B cell (primary cell): ENCODE measurements at regions of chr17 and their contacts with region 1.

Region 1: GRCh38 chr17:81601525-81602120 is 35.3 kb downstream of the NPLOC4 start:
- DNase-seq: peak; percentile 81
- ATAC-seq: peak; percentile 52
- H3K4me3 ChIP-seq: no peak overlapping the region
- H3K4me3 Mint-ChIP-seq: peak overlapping the region; percentile 14
- H3K27ac ChIP-seq: no peak overlapping the region
- H3K27ac Mint-ChIP-seq: peak overlapping the region; percentile 43
- H3K4me1 ChIP-seq: peaks cover 22 to 43% of the 10 kb centered on the region in 2 donors
- H3K4me1 Mint-ChIP-seq: peaks cover 38% of the 10 kb centered on the region
- H3K27me3 ChIP-seq: no peaks in the 10 kb centered on the region
- H3K27me3 Mint-ChIP-seq: no peaks in the 10 kb centered on the region
- CTCF ChIP-seq: peak; percentile 95

Region 2: GRCh38 chr17:80913928-80914821 is 687.4 kb before region 1 on chr17:
- CTCF ChIA-PET with region 1: no interaction called
- POLR2A ChIA-PET with region 1: interaction called, 10 read pairs
- intact Hi-C with region 1: no loop called
- DNase-seq: peak; percentile 56
- ATAC-seq: peak; percentile 28
- H3K4me3 ChIP-seq: peak overlapping the region in 3 of 5 experiments; percentile 20 to 30 (median 28)
- H3K4me3 Mint-ChIP-seq: peak overlapping the region; percentile 68
- H3K27ac ChIP-seq: peak overlapping the region; percentile 38 to 100
- H3K27ac Mint-ChIP-seq: peak overlapping the region; percentile 95
- H3K4me1 ChIP-seq: peaks cover 61 to 67% of the 10 kb centered on the region in 2 donors
- H3K4me1 Mint-ChIP-seq: peaks cover 57% of the 10 kb centered on the region
- H3K27me3 ChIP-seq: no peaks in the 10 kb centered on the region
- H3K27me3 Mint-ChIP-seq: no peaks in the 10 kb centered on the region
- CTCF ChIP-seq: no peak

Region 3: DNA sequence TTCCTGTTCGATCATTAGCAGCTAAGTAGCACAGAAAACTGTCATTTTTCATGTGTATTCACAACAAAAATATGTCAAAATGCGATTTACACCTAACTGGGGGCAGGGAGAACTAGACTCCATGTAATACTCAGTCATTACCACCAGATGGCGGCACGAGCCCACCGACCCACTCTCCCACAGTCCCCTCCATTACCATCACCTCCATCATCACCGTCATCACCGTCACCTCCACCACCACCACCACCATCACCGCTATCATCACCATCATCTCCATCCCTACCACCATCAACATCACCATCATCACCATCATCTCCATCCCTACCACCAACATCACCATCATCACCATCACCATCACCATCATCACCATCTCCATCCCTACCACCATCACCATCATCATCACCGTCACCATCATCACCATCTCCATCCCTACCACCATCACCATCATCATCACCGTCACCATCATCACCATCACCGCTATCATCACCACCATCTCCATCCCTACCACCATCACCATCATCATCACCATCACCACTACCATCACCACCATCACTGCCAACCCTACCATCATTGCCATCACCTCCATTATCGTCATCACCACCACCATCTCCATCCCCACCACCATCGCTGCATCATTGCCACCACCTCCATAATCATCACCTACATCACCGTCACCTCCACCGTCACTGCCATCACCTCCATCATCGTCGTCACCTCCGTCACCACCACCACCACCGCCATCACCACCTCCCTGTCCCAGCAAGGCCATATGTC is 348.1 kb before region 1 on chr17:
- CTCF ChIA-PET with region 1: interaction called, 33 read pairs
- POLR2A ChIA-PET with region 1: no interaction called
- intact Hi-C with region 1: no loop called
- DNase-seq: peak; percentile 77
- ATAC-seq: peak; percentile 83
- H3K4me3 ChIP-seq: no peak overlapping the region
- H3K4me3 Mint-ChIP-seq: no peak overlapping the region
- H3K27ac ChIP-seq: no peak overlapping the region
- H3K27ac Mint-ChIP-seq: peak overlapping the region; percentile 17
- H3K4me1 ChIP-seq: peaks cover 0 to 11% of the 10 kb centered on the region in 2 donors
- H3K4me1 Mint-ChIP-seq: peaks cover 7% of the 10 kb centered on the region
- H3K27me3 ChIP-seq: no peaks in the 10 kb centered on the region
- H3K27me3 Mint-ChIP-seq: no peaks in the 10 kb centered on the region
- CTCF ChIP-seq: peak; percentile 83

Region 4: DNA sequence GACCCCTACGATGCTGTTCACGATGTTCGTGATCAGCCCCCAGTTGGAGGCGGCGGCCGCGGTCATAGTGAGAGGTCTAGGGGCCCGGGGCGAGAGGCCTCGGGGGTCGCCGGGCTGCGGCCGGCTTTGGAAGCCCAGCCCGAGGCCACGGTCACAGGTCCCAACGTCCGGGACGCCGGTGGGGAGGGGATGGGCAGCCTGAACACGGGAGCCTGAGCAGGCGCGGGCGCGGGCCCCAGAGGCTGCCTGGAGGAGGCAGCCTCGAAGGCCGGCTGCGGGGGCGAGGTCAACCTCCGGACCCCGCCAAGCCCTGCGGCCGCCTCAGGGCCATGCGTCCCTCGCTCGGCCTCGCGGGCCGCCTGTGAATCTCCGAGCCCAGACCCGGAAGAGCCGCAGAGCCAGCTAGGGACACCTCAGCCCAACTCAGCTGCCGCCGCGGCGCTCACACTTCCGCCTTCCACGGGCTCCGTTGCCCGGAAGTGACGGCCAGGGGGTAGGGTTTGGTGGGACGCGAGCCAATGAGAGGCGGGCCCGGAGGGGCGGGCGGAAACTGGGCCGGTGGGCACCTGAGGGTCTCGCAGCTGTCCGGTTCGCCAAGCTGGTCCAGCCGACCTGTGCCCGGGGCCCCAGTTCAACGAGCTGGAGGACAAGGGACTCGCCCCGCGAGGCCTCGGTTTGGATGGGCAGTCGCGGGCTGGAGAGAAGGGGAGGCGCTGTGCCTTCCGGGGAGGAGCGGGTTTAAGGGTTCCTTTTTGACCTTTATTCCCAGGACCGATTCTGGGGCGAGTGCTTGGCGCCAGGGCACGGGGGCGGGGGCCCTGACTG is 306.6 kb before region 1 on chr17 and contains the start of gene SLC38A10:
- CTCF ChIA-PET with region 1: interaction called, 31 read pairs
- POLR2A ChIA-PET with region 1: no interaction called
- intact Hi-C with region 1: loop called (anchors 1 kb)
- DNase-seq: peak; percentile 92
- ATAC-seq: peak; percentile 86
- H3K4me3 ChIP-seq: peak within 1 kb of the TSS; percentile 66 to 97 (median 91)
- H3K4me3 Mint-ChIP-seq: peak within 1 kb of the TSS; percentile 97
- H3K27ac ChIP-seq: peak within 1 kb of the TSS; percentile 75 to 94
- H3K27ac Mint-ChIP-seq: peak within 1 kb of the TSS; percentile 97
- H3K4me1 ChIP-seq: peaks cover 19 to 28% of the 10 kb centered on the region in 2 donors
- H3K4me1 Mint-ChIP-seq: peaks cover 43% of the 10 kb centered on the region
- H3K27me3 ChIP-seq: no peaks in the 10 kb centered on the region
- H3K27me3 Mint-ChIP-seq: no peaks in the 10 kb centered on the region
- CTCF ChIP-seq: no peak
- total RNA-seq, gene SLC38A10: 104 and 116 TPM in 2 replicates

Region 5: DNA sequence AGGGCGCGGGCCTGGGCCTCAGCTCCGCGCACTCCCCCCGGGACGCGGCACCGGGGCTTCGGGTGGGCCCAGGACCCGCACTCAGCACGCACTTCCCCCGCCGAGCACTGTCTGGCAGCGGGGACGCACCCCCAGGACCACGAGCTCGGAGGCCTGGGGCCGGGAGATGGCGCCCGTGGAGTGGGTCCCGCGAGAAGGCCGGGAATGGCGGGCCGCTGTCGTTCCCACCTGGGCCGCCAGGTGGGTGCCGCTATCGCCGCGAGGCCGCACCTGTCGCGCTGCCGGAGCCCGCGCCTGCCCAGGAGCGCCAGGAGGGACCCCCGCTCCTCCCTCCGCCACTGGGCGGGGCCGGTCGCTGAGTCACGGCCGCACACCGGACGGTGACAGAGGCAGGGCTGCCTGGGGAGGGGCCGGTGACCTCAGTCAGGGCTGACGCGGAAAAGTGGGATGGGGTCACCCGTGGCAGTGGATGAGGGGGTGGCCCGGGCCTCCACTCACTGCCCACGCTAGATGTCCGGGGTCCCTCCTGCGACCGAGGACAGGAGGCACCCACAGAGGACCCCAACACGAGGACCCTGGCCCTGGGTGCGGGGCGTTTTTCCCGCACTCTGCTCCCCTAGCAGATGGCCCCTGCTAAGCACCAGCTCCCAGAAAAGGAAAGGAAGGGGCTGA is 82.2 kb before region 1 on chr17:
- CTCF ChIA-PET with region 1: interaction called, 75 read pairs
- POLR2A ChIA-PET with region 1: interaction called, 24 read pairs
- intact Hi-C with region 1: loop called (anchors 1 kb)
- DNase-seq: peak; percentile 88
- ATAC-seq: peak; percentile 14
- H3K4me3 ChIP-seq: peak overlapping the region in 4 of 5 experiments; percentile 47 to 94 (median 64)
- H3K4me3 Mint-ChIP-seq: peak overlapping the region; percentile 98
- H3K27ac ChIP-seq: peak overlapping the region; percentile 97 to 98
- H3K27ac Mint-ChIP-seq: peak overlapping the region; percentile 86
- H3K4me1 ChIP-seq: peaks cover 37 to 55% of the 10 kb centered on the region in 2 donors
- H3K4me1 Mint-ChIP-seq: peaks cover 42% of the 10 kb centered on the region
- H3K27me3 ChIP-seq: no peaks in the 10 kb centered on the region
- H3K27me3 Mint-ChIP-seq: no peaks in the 10 kb centered on the region
- CTCF ChIP-seq: peak; percentile 87

Region 6: DNA sequence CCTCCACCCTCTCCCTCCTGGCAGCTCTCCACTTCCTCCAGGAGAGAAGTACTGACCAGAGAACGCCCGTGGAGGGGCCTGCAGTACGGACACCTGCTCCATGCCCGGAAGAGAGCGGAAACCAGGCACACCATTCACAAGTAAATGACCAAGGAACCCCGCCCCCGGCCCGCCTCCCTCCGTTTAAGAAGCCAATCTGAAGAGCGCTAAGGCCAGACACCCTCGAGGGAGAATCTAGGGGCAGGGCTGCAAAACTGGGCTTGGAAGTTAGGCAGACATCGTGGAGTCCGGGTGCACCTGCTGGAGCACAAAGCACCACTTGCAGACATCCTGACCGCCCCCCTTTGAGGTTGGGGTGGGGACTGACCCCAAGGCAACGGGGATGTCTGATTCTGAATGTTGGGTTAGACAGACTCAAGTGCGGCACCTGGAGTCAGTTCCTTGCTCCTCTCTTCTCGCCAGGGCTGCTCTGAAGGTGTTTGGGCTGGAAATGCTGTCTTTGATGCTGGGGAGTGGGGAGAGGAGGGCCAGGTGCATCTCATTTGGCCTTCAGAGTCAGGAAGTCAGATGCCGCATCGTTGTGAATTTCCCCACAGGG is 48.5 kb before region 1 on chr17:
- CTCF ChIA-PET with region 1: interaction called, 22 read pairs
- POLR2A ChIA-PET with region 1: interaction called, 11 read pairs
- intact Hi-C with region 1: loop called (anchors 1 kb)
- DNase-seq: peak; percentile 92
- ATAC-seq: peak; percentile 64
- H3K4me3 ChIP-seq: peak overlapping the region; percentile 63 to 97 (median 91)
- H3K4me3 Mint-ChIP-seq: peak overlapping the region; percentile 92
- H3K27ac ChIP-seq: peak overlapping the region; percentile 66 to 86
- H3K27ac Mint-ChIP-seq: peak overlapping the region; percentile 93
- H3K4me1 ChIP-seq: peaks cover 18 to 23% of the 10 kb centered on the region in 2 donors
- H3K4me1 Mint-ChIP-seq: peaks cover 31% of the 10 kb centered on the region
- H3K27me3 ChIP-seq: no peaks in the 10 kb centered on the region
- H3K27me3 Mint-ChIP-seq: no peaks in the 10 kb centered on the region
- CTCF ChIP-seq: no peak

Region 7: DNA sequence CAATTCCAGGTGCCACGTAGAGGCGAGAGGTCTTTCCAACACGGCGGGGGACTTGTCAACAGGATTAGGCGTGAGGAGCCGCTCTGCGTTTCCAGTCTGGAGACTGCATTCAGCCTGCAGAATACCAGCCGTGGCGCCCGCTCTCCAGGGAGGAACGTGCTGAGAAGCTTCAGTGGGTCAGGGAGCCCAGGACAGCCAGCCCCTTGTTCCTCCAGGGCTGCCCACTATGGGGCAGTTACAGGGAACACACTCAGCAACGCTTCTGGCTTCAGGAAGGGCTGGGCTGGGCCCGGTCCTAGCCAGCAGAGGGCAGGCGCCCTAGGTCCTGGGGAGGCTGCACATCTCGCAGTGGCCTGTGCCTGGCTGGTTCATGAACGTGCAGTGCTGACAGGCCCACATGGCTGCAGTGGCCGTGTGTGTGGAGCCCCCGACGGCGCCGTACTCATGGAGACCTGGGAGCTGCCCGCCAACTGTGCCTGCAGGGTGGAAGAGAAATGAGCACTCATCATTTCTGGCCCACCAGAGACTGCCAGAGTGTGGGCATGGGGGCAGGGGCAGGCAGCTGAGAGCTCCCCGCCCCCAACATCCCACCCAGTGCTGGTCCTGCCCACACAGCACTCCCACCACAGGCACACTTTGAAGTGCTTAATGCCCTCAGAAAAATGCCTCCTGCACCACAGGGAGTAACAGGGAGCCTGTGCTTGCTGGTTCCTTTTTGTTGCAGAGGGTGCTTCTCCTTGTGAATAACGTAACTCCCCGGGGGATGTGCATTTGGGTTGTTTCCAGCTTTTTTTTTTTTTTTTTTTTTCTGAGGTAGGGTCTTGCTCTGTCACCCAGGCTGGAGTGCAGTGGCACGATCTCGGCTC is 42.4 kb before region 1 on chr17:
- CTCF ChIA-PET with region 1: interaction called, 10 read pairs
- POLR2A ChIA-PET with region 1: interaction called, 5 read pairs
- intact Hi-C with region 1: loop called (anchors 2 kb)
- DNase-seq: no peak
- ATAC-seq: no peak
- H3K4me3 ChIP-seq: no peak overlapping the region
- H3K4me3 Mint-ChIP-seq: no peak overlapping the region
- H3K27ac ChIP-seq: no peak overlapping the region
- H3K27ac Mint-ChIP-seq: no peak overlapping the region
- H3K4me1 ChIP-seq: peaks cover 31 to 51% of the 10 kb centered on the region in 2 donors
- H3K4me1 Mint-ChIP-seq: peaks cover 37% of the 10 kb centered on the region
- H3K27me3 ChIP-seq: no peaks in the 10 kb centered on the region
- H3K27me3 Mint-ChIP-seq: no peaks in the 10 kb centered on the region
- CTCF ChIP-seq: no peak

Region 8: DNA sequence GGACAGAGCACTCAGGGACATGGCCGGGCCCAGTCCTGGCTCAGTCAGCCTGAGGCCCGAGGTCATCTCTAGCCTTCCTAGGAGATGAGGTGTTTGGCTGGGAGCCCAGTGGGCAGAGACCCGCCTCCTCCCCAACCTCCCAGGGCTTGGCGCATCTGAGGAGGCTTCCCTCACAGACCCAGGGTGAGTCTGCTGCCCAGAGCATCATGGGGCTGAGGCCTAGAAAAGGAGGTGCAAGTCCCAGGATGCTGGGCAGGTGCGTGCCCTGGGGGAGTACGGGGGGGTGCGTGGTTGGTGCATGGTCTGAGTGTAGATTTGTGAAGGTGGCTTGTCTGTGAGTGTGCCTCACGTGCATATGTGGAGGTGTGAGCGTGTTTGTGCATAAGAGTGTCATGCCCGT is 50.1 kb after region 1 on chr17:
- CTCF ChIA-PET with region 1: no interaction called
- POLR2A ChIA-PET with region 1: no interaction called
- intact Hi-C with region 1: no loop called
- DNase-seq: no peak
- ATAC-seq: no peak
- H3K4me3 ChIP-seq: no peak overlapping the region
- H3K4me3 Mint-ChIP-seq: peak overlapping the region; percentile 49
- H3K27ac ChIP-seq: no peak overlapping the region
- H3K27ac Mint-ChIP-seq: no peak overlapping the region
- H3K4me1 ChIP-seq: peaks cover 12 to 18% of the 10 kb centered on the region in 2 donors
- H3K4me1 Mint-ChIP-seq: peaks cover 15% of the 10 kb centered on the region
- H3K27me3 ChIP-seq: peaks cover 0 to 36% (median 4%) of the 10 kb centered on the region in 4 experiments
- H3K27me3 Mint-ChIP-seq: peaks cover 18% of the 10 kb centered on the region
- CTCF ChIP-seq: no peak